ENCODE measurements at regions of chr5 and their contacts with region 1.

Region 1: DNA sequence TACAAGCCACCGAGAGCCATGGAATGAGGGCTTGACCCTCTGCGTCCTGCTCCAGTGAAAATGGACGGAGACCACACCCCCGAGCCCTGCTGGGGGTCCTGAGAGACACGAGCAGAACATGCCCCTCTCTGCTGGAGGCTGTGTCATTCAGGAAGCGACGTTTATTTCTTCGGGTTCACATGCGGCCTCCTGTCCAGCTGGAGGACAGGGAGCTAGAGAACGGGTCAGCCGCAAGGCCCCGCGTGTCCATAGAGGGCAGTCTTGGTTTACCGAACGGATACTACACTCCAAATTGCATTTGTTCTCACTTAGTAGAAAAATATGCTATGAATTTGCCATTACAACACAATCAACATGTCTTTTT is 36.1 kb downstream of the MRPL36 start:
- DNase-seq: peak; percentile 58
- ATAC-seq: peak; percentile 79

Region 2: DNA sequence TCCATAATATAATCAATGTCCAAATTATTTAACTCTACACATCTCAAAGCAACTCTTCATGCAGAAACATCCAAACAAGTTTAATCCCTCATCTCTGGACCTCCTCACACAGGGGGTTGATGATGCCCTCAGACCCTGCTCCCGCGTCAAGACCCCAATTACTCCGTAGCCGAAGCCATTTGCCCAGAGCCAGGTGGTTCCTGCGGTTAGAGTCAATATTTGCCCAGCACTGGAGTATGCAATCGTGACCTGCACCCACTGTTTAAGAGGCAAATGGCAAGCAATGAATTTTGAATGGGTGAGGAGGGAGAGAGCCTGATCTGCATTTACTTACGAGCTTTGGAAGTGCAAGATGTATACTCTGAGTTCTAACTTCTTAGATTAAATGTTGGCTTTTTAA is 391.2 kb after region 1 on chr5:
- intact Hi-C with region 1: loop called (anchors 5 kb)
- DNase-seq: no peak
- ATAC-seq: no peak

Region 3: DNA sequence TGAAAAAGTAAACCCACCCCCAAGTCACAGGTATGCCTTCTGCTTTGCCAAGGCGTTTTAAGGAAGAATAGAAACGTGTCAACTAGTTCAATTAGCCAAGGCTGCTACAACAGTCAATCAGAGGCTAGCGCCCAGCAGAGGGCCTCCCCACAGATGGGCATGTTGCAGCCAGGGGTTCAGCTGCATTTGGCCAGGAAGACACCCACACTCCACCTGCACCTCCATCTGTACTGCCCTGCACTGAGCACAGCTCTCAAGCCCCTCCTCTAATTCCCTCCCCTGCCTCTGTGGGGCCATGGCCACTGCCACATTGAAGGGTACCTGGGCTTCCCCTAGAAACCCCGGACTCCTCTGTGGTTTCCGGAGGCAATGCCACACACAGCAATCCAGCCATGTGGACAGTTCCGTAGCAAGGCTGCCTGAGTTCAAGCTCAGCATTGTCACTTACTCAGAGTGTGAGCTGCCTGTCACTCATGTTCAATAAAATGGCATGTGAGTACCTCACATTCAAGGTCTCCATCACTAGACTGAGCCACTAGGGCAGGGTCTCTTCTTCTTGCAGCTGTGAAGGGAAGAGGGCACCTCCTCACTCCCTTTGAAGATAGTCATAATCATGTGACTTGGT is 739.6 kb after region 1 on chr5:
- intact Hi-C with region 1: no loop called
- DNase-seq: no peak
- ATAC-seq: no peak

Region 4: DNA sequence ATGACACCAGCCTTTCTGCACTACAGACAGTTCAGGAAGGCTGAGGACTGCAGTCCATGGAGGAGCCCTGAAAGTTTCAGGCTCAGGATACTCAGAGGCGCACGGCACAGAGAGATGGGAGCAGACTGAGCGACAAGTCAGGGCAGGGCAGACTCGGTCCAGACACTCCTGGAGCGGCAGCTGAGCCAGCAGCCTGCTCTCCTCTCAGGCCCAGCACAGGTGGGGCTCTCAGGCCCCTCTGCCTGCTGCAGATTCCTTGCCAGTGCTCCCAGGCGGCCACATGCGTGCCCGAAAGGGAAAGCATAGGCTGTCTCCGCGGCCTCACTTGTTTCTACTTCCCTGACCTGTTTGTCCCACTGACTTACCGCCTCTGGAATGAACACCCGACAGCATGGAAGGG is 759.6 kb after region 1 on chr5:
- intact Hi-C with region 1: no loop called
- DNase-seq: no peak
- ATAC-seq: no peak

Measured in Right ventricle myocardium superior (tissue), 1 donor.